ENCODE measurements at regions of chr3 and their contacts with region 1.

Region 1: DNA sequence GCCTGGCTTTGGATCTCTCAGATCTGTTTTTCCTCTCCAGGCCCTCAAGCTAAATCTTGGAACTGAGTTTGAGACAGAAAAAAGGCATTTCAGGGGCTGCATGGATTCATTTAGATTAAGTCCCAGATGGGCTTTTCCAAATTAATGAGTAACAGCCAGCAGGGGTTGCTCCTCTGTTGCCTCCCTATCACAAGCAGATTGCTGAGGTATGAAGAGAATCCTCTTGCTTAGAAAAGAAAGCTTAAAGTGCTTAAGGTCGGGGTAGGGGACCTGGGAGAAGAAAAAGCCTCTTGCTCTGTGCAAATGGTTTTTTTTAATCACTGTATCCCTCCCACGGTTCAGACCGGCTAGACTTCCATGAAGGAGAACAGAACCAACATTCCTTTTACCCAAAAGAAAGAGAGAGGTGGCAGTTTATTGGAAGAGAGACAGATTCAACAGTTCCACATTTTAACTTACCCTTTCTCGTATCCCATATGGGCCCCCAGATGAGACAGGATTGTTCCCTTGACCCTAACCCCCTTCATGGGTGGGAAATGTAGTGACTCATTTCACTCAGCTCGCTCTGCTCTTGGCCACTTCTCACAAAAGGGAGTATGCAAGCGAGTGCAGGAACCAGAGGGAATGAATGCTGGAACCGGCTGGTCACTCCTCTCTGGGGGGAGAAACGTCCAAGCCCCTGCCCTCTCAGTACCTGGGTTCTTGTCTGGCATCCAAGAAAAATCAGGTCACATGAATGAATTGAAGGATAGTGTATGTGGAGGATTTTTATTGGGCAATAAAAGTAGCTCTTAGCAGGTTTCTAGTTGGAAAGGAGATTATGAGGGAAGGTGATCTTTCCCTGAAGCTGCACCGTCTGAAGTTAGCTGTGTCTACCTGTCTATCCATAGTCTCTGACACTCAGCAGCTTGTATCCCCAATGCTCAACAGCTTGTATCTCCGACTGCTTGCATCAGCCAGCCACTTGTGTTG is 745.2 kb downstream of the SI start:
- DNase-seq: no peak
- ATAC-seq: no peak
- H3K4me3 ChIP-seq: no peak overlapping the region
- H3K27ac ChIP-seq: no peak overlapping the region
- H3K4me1 ChIP-seq: no peaks in the 10 kb centered on the region
- H3K27me3 ChIP-seq: no peaks in the 10 kb centered on the region
- CTCF ChIP-seq: no peak
- POLR2A ChIP-seq: no peak
- RAD21 ChIP-seq: no peak

Region 2: DNA sequence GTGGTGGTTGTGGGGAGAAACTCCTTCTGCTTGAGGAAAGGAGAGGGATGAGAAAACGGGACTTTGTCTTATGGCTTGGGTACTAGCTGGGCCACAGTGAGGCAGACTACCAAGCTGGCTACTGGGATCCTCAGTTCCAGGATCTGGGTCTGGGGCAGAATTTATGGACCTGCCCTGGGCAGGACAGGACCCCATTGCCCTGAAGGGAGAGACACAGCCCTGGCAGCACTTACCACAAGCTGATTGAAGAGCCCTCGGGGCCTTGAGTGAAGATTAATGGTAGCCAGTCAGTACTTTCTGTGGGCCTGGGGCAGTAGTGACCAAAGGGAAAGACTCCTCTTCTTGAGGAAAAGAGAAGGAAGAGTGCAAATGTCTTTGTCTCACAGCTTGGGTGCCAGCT is 54.6 kb before region 1 on chr3:
- CTCF ChIA-PET with region 1: no interaction called
- POLR2A ChIA-PET with region 1: no interaction called
- dilution Hi-C with region 1: no loop called
- in situ Hi-C with region 1: no loop called
- intact Hi-C with region 1: loop called (anchors 10 kb)
- DNase-seq: no peak
- ATAC-seq: no peak
- H3K4me3 ChIP-seq: no peak overlapping the region
- H3K27ac ChIP-seq: no peak overlapping the region
- H3K4me1 ChIP-seq: no peaks in the 10 kb centered on the region
- H3K27me3 ChIP-seq: no peaks in the 10 kb centered on the region
- CTCF ChIP-seq: no peak
- POLR2A ChIP-seq: no peak
- RAD21 ChIP-seq: no peak